HCT116 (cell line): ENCODE measurements at regions of chr5 and their contacts with region 1.

Region 1: GRCh38 chr5:150436141-150436680 is 13.3 kb downstream of the RPS14 start:
- DNase-seq: peak; percentile 74
- ATAC-seq: peak; percentile 95
- H3K4me3 ChIP-seq: no peak overlapping the region
- H3K27ac ChIP-seq: no peak overlapping the region
- H3K4me1 ChIP-seq: peaks cover 7 to 13% of the 10 kb centered on the region in 2 experiments; a peak in 3 of 4 replicates
- H3K27me3 ChIP-seq: no peaks in the 10 kb centered on the region
- CTCF ChIP-seq: peak; percentile 76 to 93 (median 92)
- POLR2A ChIP-seq: no peak
- RAD21 ChIP-seq: peak; percentile 96

Region 2: DNA sequence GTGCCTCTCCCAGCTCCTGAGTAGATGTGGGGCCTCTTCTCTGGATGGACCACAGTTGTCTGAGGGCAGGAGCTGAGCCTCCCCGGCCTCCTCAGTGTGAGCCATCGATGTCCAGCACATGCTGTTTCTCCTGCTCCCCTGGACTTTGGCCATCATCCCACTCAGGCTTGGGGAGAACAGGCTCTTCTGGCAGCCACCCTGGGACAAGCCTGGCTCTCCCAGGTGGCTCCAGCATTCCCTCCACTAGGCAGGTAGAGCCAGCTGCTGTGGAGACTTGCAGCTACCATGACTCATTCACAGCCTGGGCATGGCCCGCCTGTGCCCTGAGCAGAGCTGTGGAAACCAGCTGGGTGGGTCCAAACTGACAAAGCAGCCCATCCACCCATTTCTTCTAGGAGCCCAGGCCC is 962.0 kb before region 1 on chr5:
- CTCF ChIA-PET with region 1: no interaction called
- POLR2A ChIA-PET with region 1: no interaction called
- RAD21 ChIA-PET with region 1: no interaction called
- intact Hi-C with region 1: no loop called
- DNase-seq: no peak
- ATAC-seq: peak; percentile 92
- H3K4me3 ChIP-seq: no peak overlapping the region
- H3K27ac ChIP-seq: no peak overlapping the region
- H3K4me1 ChIP-seq: peaks cover 3 to 35% of the 10 kb centered on the region in 2 experiments
- H3K27me3 ChIP-seq: no peaks in the 10 kb centered on the region
- CTCF ChIP-seq: peak in 1 of 3 experiments; percentile 33; a peak in 2 of 6 replicates
- POLR2A ChIP-seq: no peak
- RAD21 ChIP-seq: no peak

Region 3: DNA sequence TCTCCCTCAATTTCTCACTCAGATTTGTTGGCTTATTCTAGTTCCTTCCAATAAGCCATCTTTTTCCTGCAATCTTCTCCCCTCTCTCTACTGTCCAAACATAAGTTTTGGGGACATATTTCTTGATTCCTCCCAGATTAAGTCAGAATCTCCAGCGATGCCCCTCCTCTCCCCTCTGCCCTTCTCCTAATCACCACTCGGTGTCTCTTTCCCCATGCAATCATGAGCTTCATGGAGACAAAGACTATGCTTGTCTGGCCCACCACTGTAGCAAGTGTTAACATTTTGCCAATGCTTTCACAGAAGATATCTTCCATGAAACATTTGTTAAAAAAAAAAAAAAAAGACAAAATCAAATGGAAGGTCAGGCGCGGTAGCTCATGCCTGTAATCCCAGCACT is 534.0 kb before region 1 on chr5:
- CTCF ChIA-PET with region 1: no interaction called
- POLR2A ChIA-PET with region 1: no interaction called
- RAD21 ChIA-PET with region 1: no interaction called
- intact Hi-C with region 1: loop called (anchors 5 kb)
- DNase-seq: no peak
- ATAC-seq: peak; percentile 76
- H3K4me3 ChIP-seq: no peak overlapping the region
- H3K27ac ChIP-seq: no peak overlapping the region
- H3K4me1 ChIP-seq: peaks cover 0 to 5% of the 10 kb centered on the region in 2 experiments; a peak in 1 of 4 replicates
- H3K27me3 ChIP-seq: peaks cover 4% of the 10 kb centered on the region; the same call in 1 of the 2 replicates
- CTCF ChIP-seq: peak; percentile 24 to 41 (median 24); a peak in 3 of 6 replicates
- POLR2A ChIP-seq: no peak
- RAD21 ChIP-seq: peak; percentile 42; the same call in 1 of the 2 replicates

Region 4: DNA sequence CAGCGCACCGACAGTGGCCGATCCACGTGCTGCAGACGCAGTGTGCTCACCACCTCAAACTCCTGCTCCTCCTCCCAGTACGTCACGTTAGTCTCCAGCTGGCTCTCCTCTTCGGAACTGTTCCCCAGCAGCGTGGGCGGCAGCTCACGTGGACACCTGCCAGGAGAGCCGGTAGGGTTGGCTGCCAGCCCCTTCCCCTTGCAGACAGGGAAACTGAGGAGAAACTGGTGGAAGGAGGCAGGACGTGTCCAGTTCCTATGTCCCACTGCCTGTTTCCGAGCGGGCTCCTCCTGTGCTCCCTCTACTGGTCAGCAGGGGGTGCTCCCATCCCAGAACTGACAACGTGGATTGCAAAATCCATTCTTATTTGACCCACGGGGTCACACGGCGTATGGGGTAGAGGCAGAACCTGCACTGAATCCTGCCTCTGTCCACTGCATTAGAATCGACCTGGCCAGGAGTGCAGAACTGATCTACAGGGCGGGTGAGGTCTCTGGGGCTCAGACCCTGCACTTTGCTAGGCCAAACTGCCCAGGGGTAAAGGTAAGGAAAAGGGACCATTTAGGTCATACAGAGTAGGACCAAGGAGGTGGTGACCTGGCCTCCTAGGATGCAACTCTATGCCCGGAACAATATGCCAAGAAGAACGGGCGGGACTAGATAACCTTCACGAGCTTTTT is 306.3 kb before region 1 on chr5:
- CTCF ChIA-PET with region 1: no interaction called
- POLR2A ChIA-PET with region 1: no interaction called
- RAD21 ChIA-PET with region 1: no interaction called
- intact Hi-C with region 1: loop called (anchors 1 kb)
- DNase-seq: peak; percentile 43
- ATAC-seq: peak; percentile 96
- H3K4me3 ChIP-seq: peak overlapping the region in 1 of 2 experiments; percentile 25; a peak in 1 of 4 replicates
- H3K27ac ChIP-seq: no peak overlapping the region
- H3K4me1 ChIP-seq: peaks cover 0 to 9% of the 10 kb centered on the region in 2 experiments; a peak in 1 of 4 replicates
- H3K27me3 ChIP-seq: no peaks in the 10 kb centered on the region
- CTCF ChIP-seq: peak; percentile 91 to 94 (median 94)
- POLR2A ChIP-seq: no peak
- RAD21 ChIP-seq: peak; percentile 97

Region 5: GRCh38 chr5:150161242-150162141 is 274.7 kb before region 1 on chr5:
- CTCF ChIA-PET with region 1: interaction called, 3 read pairs
- POLR2A ChIA-PET with region 1: no interaction called
- RAD21 ChIA-PET with region 1: no interaction called
- intact Hi-C with region 1: loop called (anchors 1 kb)
- DNase-seq: peak; percentile 63
- ATAC-seq: peak; percentile 93
- H3K4me3 ChIP-seq: peak overlapping the region; percentile 29 to 52
- H3K27ac ChIP-seq: peak overlapping the region; percentile 20; the same call in 1 of the 2 replicates
- H3K4me1 ChIP-seq: peaks cover 3 to 19% of the 10 kb centered on the region in 2 experiments; a peak in 3 of 4 replicates
- H3K27me3 ChIP-seq: no peaks in the 10 kb centered on the region
- CTCF ChIP-seq: peak in 2 of 3 experiments; percentile 78 to 96; a peak in 4 of 6 replicates
- POLR2A ChIP-seq: no peak
- RAD21 ChIP-seq: no peak

Region 6: GRCh38 chr5:150272526-150272925 is 163.7 kb before region 1 on chr5:
- CTCF ChIA-PET with region 1: interaction called, 4 read pairs
- POLR2A ChIA-PET with region 1: no interaction called
- RAD21 ChIA-PET with region 1: interaction called, 3 to 6 read pairs
- intact Hi-C with region 1: loop called (anchors 1 kb)
- DNase-seq: no peak
- ATAC-seq: peak; percentile 84
- H3K4me3 ChIP-seq: no peak overlapping the region
- H3K27ac ChIP-seq: no peak overlapping the region
- H3K4me1 ChIP-seq: no peaks in the 10 kb centered on the region
- H3K27me3 ChIP-seq: no peaks in the 10 kb centered on the region
- CTCF ChIP-seq: peak; percentile 43 to 72 (median 45); a peak in 4 of 6 replicates
- POLR2A ChIP-seq: no peak
- RAD21 ChIP-seq: peak; percentile 86

Region 7: DNA sequence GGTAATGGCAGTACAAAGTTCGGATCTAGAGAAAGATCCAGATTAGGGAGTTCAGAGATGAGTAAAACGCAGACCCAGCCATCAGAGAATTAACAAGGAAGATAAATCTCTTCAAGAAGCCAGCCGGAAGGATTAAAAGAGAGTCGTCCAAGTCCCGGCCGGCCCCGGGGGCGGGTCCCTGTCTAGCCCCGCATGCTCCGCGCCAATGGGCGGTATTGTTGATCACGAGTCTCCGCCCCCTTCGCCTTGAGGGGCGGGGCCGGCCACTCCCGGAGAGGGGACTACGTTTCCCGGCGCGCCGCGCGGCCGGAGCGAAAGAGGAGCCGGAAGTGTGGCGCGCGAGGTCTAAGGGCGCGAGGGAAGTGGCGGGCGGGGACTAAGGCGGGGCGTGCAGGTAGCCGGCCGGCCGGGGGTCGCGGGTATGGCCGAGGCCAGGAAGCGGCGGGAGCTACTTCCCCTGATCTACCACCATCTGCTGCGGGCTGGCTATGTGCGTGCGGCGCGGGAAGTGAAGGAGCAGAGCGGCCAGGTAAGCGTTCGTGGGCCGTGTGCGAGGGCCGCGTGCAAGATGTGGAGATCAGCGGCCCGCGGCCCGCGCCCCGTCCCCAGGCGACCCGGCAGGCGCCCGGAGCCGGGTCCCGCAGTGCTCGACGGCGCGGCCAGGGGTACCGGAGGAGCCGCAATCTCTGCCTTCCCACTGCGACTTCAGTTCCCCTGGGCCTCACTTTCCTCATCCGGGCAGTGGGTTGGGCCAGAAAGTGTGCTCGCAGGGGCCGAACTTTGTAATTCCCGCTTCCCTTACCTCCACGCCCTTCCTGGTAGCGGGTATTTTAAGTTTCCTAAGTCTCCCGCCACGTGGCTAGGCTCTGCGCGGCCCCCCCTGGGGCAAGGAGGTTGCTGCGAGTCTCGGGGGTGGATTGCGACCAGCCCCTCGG is 78.6 kb before region 1 on chr5 and contains the start of gene TCOF1:
- CTCF ChIA-PET with region 1: no interaction called
- POLR2A ChIA-PET with region 1: no interaction called
- RAD21 ChIA-PET with region 1: interaction called in 1 of 2 experiments, 3 read pairs
- intact Hi-C with region 1: loop called (anchors 5 kb)
- DNase-seq: peak; percentile 88
- ATAC-seq: peak; percentile 95
- H3K4me3 ChIP-seq: peak within 1 kb of the TSS; percentile 94 to 95
- H3K27ac ChIP-seq: peak within 1 kb of the TSS; percentile 74
- H3K4me1 ChIP-seq: peaks cover 3 to 13% of the 10 kb centered on the region in 2 experiments; a peak in 3 of 4 replicates
- H3K27me3 ChIP-seq: no peaks in the 10 kb centered on the region
- CTCF ChIP-seq: no peak
- POLR2A ChIP-seq: peak; percentile 39
- RAD21 ChIP-seq: no peak
- total RNA-seq, gene TCOF1: 94.7 TPM

Region 8: GRCh38 chr5:150398722-150399523 is 37.3 kb before region 1 on chr5:
- CTCF ChIA-PET with region 1: interaction called, 15 read pairs
- POLR2A ChIA-PET with region 1: no interaction called
- RAD21 ChIA-PET with region 1: interaction called in 1 of 2 experiments, 4 read pairs
- intact Hi-C with region 1: loop called (anchors 5 kb)
- DNase-seq: no peak
- ATAC-seq: peak; percentile 67
- H3K4me3 ChIP-seq: no peak overlapping the region
- H3K27ac ChIP-seq: no peak overlapping the region
- H3K4me1 ChIP-seq: no peaks in the 10 kb centered on the region
- H3K27me3 ChIP-seq: no peaks in the 10 kb centered on the region
- CTCF ChIP-seq: peak in 2 of 3 experiments; percentile 17 to 48; a peak in 3 of 6 replicates
- POLR2A ChIP-seq: no peak
- RAD21 ChIP-seq: no peak

Region 9: DNA sequence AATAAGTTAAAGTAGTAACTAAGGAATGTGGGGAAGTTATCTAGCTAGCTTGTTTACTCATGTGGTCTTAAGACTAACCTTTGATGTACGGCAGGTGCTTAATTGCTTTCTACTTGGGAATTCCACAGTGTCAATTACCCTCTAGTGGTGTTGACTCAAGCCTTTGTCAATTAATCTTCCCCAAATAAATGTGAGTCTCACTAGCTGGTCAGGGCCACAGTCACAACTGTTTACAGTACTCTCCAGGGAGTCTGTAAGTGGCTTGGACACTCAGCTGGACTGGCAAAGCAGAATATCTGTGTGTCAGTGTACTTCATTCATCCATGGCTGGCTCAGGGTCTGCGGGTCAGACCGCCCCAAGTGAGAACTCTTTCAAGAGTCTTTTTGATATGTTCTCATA is 373.2 kb after region 1 on chr5:
- CTCF ChIA-PET with region 1: no interaction called
- POLR2A ChIA-PET with region 1: no interaction called
- RAD21 ChIA-PET with region 1: no interaction called
- intact Hi-C with region 1: no loop called
- DNase-seq: no peak
- ATAC-seq: no peak
- H3K4me3 ChIP-seq: no peak overlapping the region
- H3K27ac ChIP-seq: no peak overlapping the region
- H3K4me1 ChIP-seq: 0 out of 4 replicates have a peak, but pooled peaks cover 0 to 2% of the 10 kb centered on the region in 2 experiments
- H3K27me3 ChIP-seq: no peaks in the 10 kb centered on the region
- CTCF ChIP-seq: no peak
- POLR2A ChIP-seq: no peak
- RAD21 ChIP-seq: no peak